ENCODE measurements at regions of chr2 and their contacts with region 1.

Region 1: DNA sequence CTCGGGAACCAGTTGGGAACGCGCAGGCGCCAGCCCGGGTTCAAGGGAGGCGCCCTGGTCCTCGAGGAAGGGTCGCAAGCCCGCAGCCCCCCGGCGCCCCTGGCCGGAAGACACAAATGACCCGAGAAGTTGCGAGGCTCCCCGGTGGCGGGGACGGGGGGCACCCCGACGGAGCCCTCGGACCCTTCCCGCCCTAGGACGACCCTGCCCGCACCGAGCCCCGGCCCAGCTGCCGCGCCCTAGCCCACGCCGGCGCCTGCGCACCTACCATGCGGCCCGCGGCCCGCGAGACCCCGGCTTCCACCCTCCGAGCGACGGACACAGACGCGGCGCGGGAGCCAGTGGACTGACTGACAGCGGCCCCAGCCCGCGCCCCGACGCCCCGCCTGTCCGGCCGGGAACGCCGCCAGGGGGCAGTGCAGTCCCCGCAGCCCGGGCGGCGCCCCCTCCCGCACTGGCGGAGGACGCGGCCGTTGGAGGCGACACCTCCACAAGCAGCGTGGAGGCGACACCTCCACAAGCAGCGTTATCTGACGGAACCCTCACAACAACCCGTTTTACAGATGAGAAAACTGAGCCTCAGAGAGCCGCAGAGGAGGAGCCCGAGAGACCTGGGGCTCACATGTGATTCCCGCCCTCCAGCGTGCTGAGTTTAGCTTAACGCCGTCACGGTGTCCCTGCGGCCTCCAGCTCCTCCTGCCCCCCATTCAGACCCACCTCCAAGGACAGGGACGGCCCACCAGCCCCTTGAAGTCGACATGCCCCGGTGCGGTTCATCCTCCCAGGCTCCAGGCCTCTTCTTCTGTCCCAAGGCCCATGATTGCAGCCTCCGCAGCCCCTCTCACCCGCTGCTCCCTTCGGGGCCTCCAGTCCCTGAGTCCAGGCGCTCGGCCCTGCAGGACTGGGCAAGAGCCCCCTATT is at the start of gene NMUR1:
- DNase-seq: peak; percentile 70
- ATAC-seq: peak; percentile 94
- H3K4me3 Mint-ChIP-seq: peak within 1 kb of the TSS; percentile 19
- H3K27ac Mint-ChIP-seq: no peak within 1 kb of the TSS
- H3K4me1 Mint-ChIP-seq: peaks cover 13% of the 10 kb centered on the region
- H3K27me3 Mint-ChIP-seq: peaks cover 19% of the 10 kb centered on the region
- CTCF ChIP-seq: peak; percentile 98
- total RNA-seq, gene NMUR1: 0.09 TPM in 1 of 2 experiments, not detected in the other

Region 2: GRCh38 chr2:231542136-231542535 is 11.8 kb after region 1 on chr2:
- CTCF ChIA-PET with region 1: interaction called, 10 read pairs
- POLR2A ChIA-PET with region 1: interaction called, 3 read pairs
- intact Hi-C with region 1: no loop called
- DNase-seq: no peak
- ATAC-seq: no peak
- H3K4me3 Mint-ChIP-seq: no peak overlapping the region
- H3K27ac Mint-ChIP-seq: no peak overlapping the region
- H3K4me1 Mint-ChIP-seq: peaks cover 20% of the 10 kb centered on the region
- H3K27me3 Mint-ChIP-seq: no peaks in the 10 kb centered on the region
- CTCF ChIP-seq: no peak

Region 3: DNA sequence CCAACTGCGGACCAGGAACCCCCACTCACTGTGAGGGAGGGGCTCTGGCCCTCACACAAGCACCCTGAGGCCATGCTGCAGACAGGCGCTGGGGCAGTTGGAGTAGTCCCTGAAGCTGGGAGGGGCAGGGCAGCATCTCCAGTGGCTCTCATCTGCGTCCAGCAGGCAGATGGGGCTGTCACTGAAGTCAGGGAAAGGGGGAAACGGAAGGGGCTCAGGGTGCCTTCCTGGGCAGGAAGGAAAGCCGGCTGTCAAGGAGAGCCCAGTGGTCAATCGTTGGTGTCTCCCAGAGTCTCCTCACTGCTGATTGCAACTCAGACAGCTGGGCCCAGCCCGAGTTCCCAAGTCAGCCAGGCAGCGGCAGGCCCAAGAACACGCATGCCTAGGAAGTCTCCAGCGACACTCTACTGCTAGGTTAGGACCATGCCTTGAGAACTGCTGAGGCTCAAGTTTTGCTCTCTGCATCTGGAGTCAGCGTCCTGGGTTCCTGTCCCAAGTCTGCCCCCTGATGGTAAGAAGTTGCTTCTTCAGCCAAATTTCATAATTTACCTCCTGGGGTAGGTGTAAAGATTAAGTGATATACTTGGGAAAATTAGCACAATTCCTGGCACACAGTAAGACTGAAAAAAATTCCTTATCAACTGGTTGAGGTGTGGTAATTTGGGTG is 27.4 kb after region 1 on chr2:
- CTCF ChIA-PET with region 1: interaction called, 64 read pairs
- POLR2A ChIA-PET with region 1: interaction called, 4 read pairs
- intact Hi-C with region 1: no loop called
- DNase-seq: peak; percentile 74
- ATAC-seq: peak; percentile 96
- H3K4me3 Mint-ChIP-seq: no peak overlapping the region
- H3K27ac Mint-ChIP-seq: no peak overlapping the region
- H3K4me1 Mint-ChIP-seq: peaks cover 25% of the 10 kb centered on the region
- H3K27me3 Mint-ChIP-seq: no peaks in the 10 kb centered on the region
- CTCF ChIP-seq: peak; percentile 51

Region 4: GRCh38 chr2:231575612-231576256 is 45.4 kb after region 1 on chr2:
- CTCF ChIA-PET with region 1: no interaction called
- POLR2A ChIA-PET with region 1: no interaction called
- intact Hi-C with region 1: no loop called
- DNase-seq: no peak
- ATAC-seq: no peak
- H3K4me3 Mint-ChIP-seq: no peak overlapping the region
- H3K27ac Mint-ChIP-seq: no peak overlapping the region
- H3K4me1 Mint-ChIP-seq: no peaks in the 10 kb centered on the region
- H3K27me3 Mint-ChIP-seq: peaks cover 3% of the 10 kb centered on the region
- CTCF ChIP-seq: no peak

Region 5: DNA sequence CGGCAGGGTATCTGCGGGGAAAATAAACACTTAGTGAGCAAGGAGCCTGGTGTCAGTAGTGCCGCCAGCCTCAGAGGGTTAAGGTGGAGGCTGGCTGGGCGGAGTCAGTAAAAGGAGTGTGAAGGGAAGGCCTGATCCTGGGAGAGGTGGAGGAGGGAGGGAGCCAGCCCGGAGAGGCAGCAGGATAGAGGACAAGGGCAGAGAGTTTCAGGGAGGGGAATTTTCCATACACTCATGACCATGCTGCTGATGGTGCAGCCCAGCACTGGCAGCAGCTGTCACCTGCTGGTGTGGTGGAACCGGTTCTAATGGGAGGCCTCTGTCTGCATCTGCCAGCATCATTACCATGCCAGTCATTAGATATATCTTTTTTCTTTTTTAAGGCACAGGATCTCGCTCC is 60.3 kb after region 1 on chr2:
- CTCF ChIA-PET with region 1: no interaction called
- POLR2A ChIA-PET with region 1: no interaction called
- intact Hi-C with region 1: no loop called
- DNase-seq: no peak
- ATAC-seq: no peak
- H3K4me3 Mint-ChIP-seq: no peak overlapping the region
- H3K27ac Mint-ChIP-seq: no peak overlapping the region
- H3K4me1 Mint-ChIP-seq: no peaks in the 10 kb centered on the region
- H3K27me3 Mint-ChIP-seq: no peaks in the 10 kb centered on the region
- CTCF ChIP-seq: no peak

Measured in activated CD8-positive, alpha-beta T cell treated with anti-CD3 and anti-CD28 coated beads for 36 hours (primary cell).